Naive thymus-derived CD4-positive, alpha-beta T cell (primary cell): ENCODE measurements at regions of chr17 and their contacts with region 1.

Region 1: DNA sequence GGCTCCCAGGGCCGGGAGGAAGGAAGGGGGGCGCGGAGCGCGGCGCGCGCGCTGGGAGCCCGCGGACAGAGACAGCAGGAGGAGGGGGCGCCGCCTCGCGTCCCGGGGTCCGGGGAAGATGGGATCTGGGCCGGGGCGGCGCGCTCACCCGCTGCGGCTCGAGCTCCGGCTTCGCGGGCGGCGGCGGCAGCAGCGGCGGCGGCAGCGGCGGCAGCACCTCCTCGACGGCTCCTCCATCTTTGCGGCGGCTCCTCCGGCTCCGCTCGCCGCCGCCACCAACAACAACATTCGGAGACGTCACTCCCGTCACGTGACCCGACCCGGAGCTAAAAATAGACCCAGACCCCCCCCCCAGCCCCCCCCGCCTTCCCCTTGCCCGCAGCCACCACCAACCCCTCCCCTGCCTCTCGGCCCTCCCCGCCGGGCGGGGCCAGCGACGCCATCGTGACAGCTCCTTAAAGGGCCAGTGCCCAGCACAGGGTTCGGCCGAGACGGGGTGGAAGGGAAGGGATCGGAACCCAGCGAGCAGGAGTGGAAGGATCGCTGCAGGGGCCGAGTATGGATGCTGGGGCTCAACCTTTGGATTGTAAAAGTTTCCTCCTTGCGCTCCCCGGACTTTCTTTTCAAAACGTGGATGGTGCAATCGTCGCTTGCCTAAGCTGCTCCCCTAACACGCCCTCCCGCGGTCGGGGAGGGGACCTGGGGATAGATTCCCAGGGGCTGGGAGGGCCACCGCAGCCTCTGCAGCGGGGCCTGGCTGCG is at the start of gene HDAC5:
- DNase-seq: peak; percentile 88 to 95 (median 95)
- ATAC-seq: peak; percentile 98
- H3K4me3 ChIP-seq: peak within 1 kb of the TSS; percentile 95
- H3K4me3 Mint-ChIP-seq: peak within 1 kb of the TSS; percentile 92 to 99 (median 98)
- H3K27ac ChIP-seq: peak within 1 kb of the TSS; percentile 90
- H3K27ac Mint-ChIP-seq: peak within 1 kb of the TSS; percentile 84 to 99 (median 96)
- H3K4me1 ChIP-seq: peaks cover 14 to 21% of the 10 kb centered on the region in 2 donors
- H3K4me1 Mint-ChIP-seq: peaks cover 21 to 53% (median 46%) of the 10 kb centered on the region in 7 donors
- H3K27me3 ChIP-seq: no peaks in the 10 kb centered on the region
- H3K27me3 Mint-ChIP-seq: peaks cover 0 to 9% (median 0%) of the 10 kb centered on the region in 5 donors
- total RNA-seq, gene HDAC5: 15.2 to 106 (median 70.9) TPM

Region 2: GRCh38 chr17:43940630-43941029 is 182.9 kb before region 1 on chr17:
- CTCF ChIA-PET with region 1: no interaction called
- POLR2A ChIA-PET with region 1: no interaction called
- intact Hi-C with region 1: loop called in 1 of 2 experiments (anchors 5 kb)
- DNase-seq: no peak
- ATAC-seq: no peak
- H3K4me3 ChIP-seq: no peak overlapping the region
- H3K4me3 Mint-ChIP-seq: no peak overlapping the region
- H3K27ac ChIP-seq: no peak overlapping the region
- H3K27ac Mint-ChIP-seq: no peak overlapping the region
- H3K4me1 ChIP-seq: peaks cover 0 to 3% of the 10 kb centered on the region in 2 donors
- H3K4me1 Mint-ChIP-seq: peaks cover 0 to 22% (median 11%) of the 10 kb centered on the region in 7 donors
- H3K27me3 ChIP-seq: no peaks in the 10 kb centered on the region
- H3K27me3 Mint-ChIP-seq: peaks cover 0 to 22% (median 0%) of the 10 kb centered on the region in 5 donors

Region 3: GRCh38 chr17:44070455-44071197 is 52.9 kb before region 1 on chr17 and contains the start of gene G6PC3:
- CTCF ChIA-PET with region 1: no interaction called
- POLR2A ChIA-PET with region 1: interaction called, 7 read pairs
- intact Hi-C with region 1: loop called (anchors 1 kb)
- DNase-seq: peak; percentile 35 to 86 (median 49)
- ATAC-seq: peak; percentile 67
- H3K4me3 ChIP-seq: peak within 1 kb of the TSS; percentile 75
- H3K4me3 Mint-ChIP-seq: peak within 1 kb of the TSS; percentile 91 to 97 (median 94)
- H3K27ac ChIP-seq: peak within 1 kb of the TSS; percentile 83
- H3K27ac Mint-ChIP-seq: peak within 1 kb of the TSS; percentile 29 to 96 (median 93)
- H3K4me1 ChIP-seq: peaks cover 21 to 24% of the 10 kb centered on the region in 2 donors
- H3K4me1 Mint-ChIP-seq: peaks cover 31 to 49% (median 36%) of the 10 kb centered on the region in 7 donors
- H3K27me3 ChIP-seq: no peaks in the 10 kb centered on the region
- H3K27me3 Mint-ChIP-seq: no peaks in the 10 kb centered on the region
- total RNA-seq, gene G6PC3: 9.4 to 25.8 (median 13.9) TPM

Region 4: DNA sequence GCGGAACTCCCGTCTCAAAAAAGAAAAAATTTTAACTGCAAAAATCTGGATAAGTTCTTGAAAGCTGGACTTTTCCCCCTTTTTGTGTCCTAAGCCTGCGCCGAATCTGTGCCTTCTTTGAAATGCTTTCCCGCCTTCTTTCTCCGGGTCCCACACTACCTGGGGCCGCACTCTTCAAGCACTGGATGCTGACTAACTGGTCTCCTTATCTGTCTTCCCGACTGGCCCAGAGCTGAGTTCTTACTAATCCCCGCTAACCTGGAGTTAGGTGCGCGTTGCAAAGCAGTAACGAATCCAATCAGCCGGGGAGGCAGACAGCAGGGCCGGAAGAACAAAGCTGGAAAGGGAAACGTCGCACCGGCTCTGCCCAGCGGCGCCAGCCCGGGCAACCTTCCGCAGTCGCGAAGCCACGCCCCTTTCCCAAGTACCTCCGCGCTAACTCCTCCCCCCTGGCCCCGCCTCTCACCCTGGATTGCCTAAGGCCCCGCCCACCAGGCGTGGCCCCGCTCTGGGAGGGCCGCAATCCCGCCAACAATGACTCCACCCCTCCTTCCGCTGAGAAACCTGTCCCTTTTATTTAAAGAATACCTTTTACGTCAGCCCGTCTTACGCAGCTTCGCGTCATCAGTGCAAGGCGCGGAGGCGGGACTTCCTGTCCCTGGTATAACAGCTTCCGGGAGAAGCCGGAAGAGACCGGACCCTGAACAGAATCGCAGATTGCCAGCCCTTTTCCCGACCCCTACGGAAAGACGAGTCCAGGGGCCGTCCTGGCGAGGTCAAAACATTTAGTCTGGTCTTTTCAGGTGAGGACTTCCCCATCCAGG is 63.0 kb after region 1 on chr17 and contains the start of gene TMUB2:
- CTCF ChIA-PET with region 1: interaction called, 3 read pairs
- POLR2A ChIA-PET with region 1: interaction called, 18 read pairs
- intact Hi-C with region 1: loop called (anchors 1 kb)
- DNase-seq: peak; percentile 99 to 100 (median 100)
- ATAC-seq: peak; percentile 99
- H3K4me3 ChIP-seq: peak within 1 kb of the TSS; percentile 100
- H3K4me3 Mint-ChIP-seq: peak within 1 kb of the TSS; percentile 94 to 100 (median 98)
- H3K27ac ChIP-seq: peak within 1 kb of the TSS; percentile 99
- H3K27ac Mint-ChIP-seq: peak within 1 kb of the TSS; percentile 97 to 100 (median 100)
- H3K4me1 ChIP-seq: peaks cover 23 to 35% of the 10 kb centered on the region in 2 donors
- H3K4me1 Mint-ChIP-seq: peaks cover 41 to 68% (median 51%) of the 10 kb centered on the region in 7 donors
- H3K27me3 ChIP-seq: no peaks in the 10 kb centered on the region
- H3K27me3 Mint-ChIP-seq: no peaks in the 10 kb centered on the region
- total RNA-seq, gene TMUB2: 34.9 to 56.0 (median 41.6) TPM

Region 5: DNA sequence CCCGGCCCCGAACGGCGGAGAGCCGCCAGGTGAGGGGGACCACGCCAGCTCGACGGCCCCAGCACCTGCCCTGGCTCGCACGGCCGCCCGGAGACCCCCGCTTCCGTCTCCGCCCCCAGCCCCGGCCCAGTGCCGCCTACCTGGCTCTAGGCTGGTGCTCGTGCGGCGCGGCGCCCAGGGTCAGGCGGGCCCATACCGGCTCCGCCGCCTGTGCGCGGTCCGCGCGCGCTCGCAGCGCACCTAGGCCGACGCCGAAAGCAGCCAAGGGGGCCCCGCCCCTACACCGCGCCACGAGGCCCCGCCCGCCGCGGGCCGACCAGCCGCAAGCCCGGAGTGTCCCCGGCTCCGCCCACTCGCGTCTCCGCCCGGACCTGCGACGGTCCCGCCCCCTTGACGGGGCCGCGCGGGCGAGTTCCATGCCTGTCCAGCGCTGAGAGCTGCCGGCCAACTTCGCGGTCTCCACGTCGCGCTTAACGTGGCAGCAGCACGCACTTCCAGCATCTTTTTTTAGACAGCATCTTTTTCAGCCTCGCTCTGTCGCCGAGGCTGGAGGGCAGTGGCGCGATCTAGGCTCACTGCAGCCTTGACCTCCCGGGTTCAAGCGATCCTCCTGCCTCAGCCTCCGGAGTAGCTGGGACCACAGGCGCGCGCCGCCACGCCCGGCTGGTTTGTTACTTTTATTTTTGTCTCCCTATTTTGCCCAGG is 201.2 kb after region 1 on chr17 and contains the start of gene SLC25A39:
- CTCF ChIA-PET with region 1: interaction called, 4 read pairs
- POLR2A ChIA-PET with region 1: interaction called, 3 read pairs
- intact Hi-C with region 1: loop called (anchors 1 kb)
- DNase-seq: peak; percentile 87 to 99 (median 94)
- ATAC-seq: peak; percentile 91
- H3K4me3 ChIP-seq: peak within 1 kb of the TSS; percentile 98
- H3K4me3 Mint-ChIP-seq: peak within 1 kb of the TSS; percentile 90 to 96 (median 93)
- H3K27ac ChIP-seq: peak within 1 kb of the TSS; percentile 83
- H3K27ac Mint-ChIP-seq: peak within 1 kb of the TSS; percentile 89 to 98 (median 95)
- H3K4me1 ChIP-seq: peaks cover 13 to 17% of the 10 kb centered on the region in 2 donors
- H3K4me1 Mint-ChIP-seq: peaks cover 0 to 38% (median 19%) of the 10 kb centered on the region in 7 donors
- H3K27me3 ChIP-seq: no peaks in the 10 kb centered on the region
- H3K27me3 Mint-ChIP-seq: no peaks in the 10 kb centered on the region
- total RNA-seq, gene SLC25A39: 75.4 to 107 (median 101) TPM

Region 6: DNA sequence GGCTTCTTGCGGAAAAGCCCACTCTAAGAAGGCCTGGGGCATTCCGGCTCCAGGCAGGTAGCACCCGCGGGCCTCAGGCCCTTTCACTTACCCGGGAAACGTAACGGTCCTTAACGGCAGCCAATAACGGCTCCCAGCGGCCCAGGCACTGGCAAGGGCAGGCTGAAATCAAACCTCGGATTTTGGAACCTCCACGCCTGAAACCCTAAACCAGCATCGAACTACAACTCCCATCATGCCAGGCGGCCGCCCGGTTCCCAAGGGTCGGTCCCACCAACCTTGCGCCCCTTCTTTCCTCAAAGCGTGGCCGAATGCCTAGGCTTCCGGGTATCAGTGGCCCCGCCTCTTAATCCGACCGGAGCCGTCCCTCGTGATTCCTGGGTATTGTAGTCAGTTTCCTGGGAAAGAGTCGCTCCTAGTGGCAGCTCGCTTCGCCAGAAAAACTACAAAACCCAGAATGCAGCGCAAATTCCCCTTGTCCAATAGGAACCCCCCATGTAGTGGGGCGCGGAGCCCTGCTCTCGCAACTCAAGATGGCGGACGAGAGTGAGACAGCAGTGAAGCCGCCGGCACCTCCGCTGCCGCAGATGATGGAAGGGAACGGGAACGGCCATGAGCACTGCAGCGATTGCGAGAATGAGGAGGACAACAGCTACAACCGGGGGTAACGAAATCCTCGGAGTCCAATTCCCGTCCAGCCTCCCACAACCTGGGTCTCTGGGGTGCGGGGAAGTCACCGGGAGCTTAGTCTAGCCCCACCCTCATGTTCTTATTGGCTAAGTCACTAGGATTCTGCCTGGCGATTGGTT is 937.5 kb after region 1 on chr17 and contains the start of gene NMT1:
- CTCF ChIA-PET with region 1: no interaction called
- POLR2A ChIA-PET with region 1: no interaction called
- intact Hi-C with region 1: loop called in 1 of 2 experiments (anchors 5 kb)
- DNase-seq: peak; percentile 81 to 98 (median 98)
- ATAC-seq: peak; percentile 95
- H3K4me3 ChIP-seq: peak within 1 kb of the TSS; percentile 97
- H3K4me3 Mint-ChIP-seq: peak within 1 kb of the TSS; percentile 80 to 100 (median 98)
- H3K27ac ChIP-seq: peak within 1 kb of the TSS; percentile 87
- H3K27ac Mint-ChIP-seq: peak within 1 kb of the TSS; percentile 88 to 99 (median 97)
- H3K4me1 ChIP-seq: peaks cover 18 to 20% of the 10 kb centered on the region in 2 donors
- H3K4me1 Mint-ChIP-seq: peaks cover 26 to 66% (median 53%) of the 10 kb centered on the region in 7 donors
- H3K27me3 ChIP-seq: no peaks in the 10 kb centered on the region
- H3K27me3 Mint-ChIP-seq: no peaks in the 10 kb centered on the region
- total RNA-seq, gene NMT1: 59.5 to 136 (median 121) TPM